ENCODE measurements at regions of chr5 and their contacts with region 1.

Region 1: GRCh38 chr5:151740336-151740942 is 18.0 kb downstream of the ATOX1 start:
- DNase-seq: no peak
- ATAC-seq: peak; percentile 70
- H3K4me3 ChIP-seq: no peak overlapping the region
- H3K27ac ChIP-seq: peak overlapping the region; percentile 54
- H3K4me1 ChIP-seq: peaks cover 39% of the 10 kb centered on the region
- H3K27me3 ChIP-seq: no peaks in the 10 kb centered on the region
- CTCF ChIP-seq: peak; percentile 76 to 88 (median 81)
- EP300 ChIP-seq: no peak
- POLR2A ChIP-seq: no peak
- RAD21 ChIP-seq: peak; percentile 90

Region 2: GRCh38 chr5:151023651-151024050 is 716.8 kb before region 1 on chr5:
- CTCF ChIA-PET with region 1: no interaction called
- POLR2A ChIA-PET with region 1: no interaction called
- RAD21 ChIA-PET with region 1: no interaction called
- SMC1A ChIA-PET with region 1: no interaction called
- in situ Hi-C with region 1: no loop called
- intact Hi-C with region 1: no loop called
- DNase-seq: no peak
- ATAC-seq: no peak
- H3K4me3 ChIP-seq: no peak overlapping the region
- H3K27ac ChIP-seq: no peak overlapping the region
- H3K4me1 ChIP-seq: no peaks in the 10 kb centered on the region
- H3K27me3 ChIP-seq: no peaks in the 10 kb centered on the region
- CTCF ChIP-seq: no peak
- EP300 ChIP-seq: no peak
- POLR2A ChIP-seq: 0 out of 2 replicates have a peak, but pooled peaks have one; percentile 5
- RAD21 ChIP-seq: no peak

Region 3: GRCh38 chr5:151447174-151448037 is 293.0 kb before region 1 on chr5 and contains the start of gene SLC36A1:
- CTCF ChIA-PET with region 1: interaction called, 6 read pairs
- POLR2A ChIA-PET with region 1: no interaction called
- RAD21 ChIA-PET with region 1: interaction called, 3 read pairs
- SMC1A ChIA-PET with region 1: no interaction called
- in situ Hi-C with region 1: loop called (anchors 5 kb)
- intact Hi-C with region 1: loop called (anchors 2 kb)
- DNase-seq: peak; percentile 68
- ATAC-seq: peak; percentile 89
- H3K4me3 ChIP-seq: peak within 1 kb of the TSS; percentile 87
- H3K27ac ChIP-seq: no peak within 1 kb of the TSS
- H3K4me1 ChIP-seq: peaks cover 12% of the 10 kb centered on the region
- H3K27me3 ChIP-seq: no peaks in the 10 kb centered on the region
- CTCF ChIP-seq: peak; percentile 84 to 97 (median 93); a peak in 4 of 6 replicates
- EP300 ChIP-seq: peak in 1 of 2 experiments; percentile 22; a peak in 1 of 4 replicates
- POLR2A ChIP-seq: peak; percentile 86
- RAD21 ChIP-seq: peak; percentile 94
- polyA plus RNA-seq, gene SLC36A1: 0.50 to 0.66 TPM

Region 4: DNA sequence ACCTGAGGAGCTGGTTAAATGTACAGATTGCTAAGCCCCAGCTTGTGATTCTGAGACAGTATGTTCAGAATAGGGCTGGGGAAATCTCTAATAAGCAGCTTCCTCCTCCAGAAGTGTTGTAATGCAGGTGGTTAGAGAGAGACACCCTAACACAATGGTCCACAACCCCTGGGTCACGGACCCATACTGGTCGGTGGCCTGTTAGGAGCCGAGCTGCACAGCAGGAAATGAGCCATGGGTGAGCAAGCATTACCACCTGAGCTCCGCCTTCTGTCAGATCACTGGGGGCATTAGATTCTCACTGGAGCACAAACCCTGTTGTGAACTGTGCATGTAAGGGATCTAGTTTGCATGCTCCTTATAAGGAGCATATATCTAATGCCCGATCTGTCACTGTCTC is 231.2 kb before region 1 on chr5:
- CTCF ChIA-PET with region 1: no interaction called
- POLR2A ChIA-PET with region 1: no interaction called
- RAD21 ChIA-PET with region 1: no interaction called
- SMC1A ChIA-PET with region 1: interaction called, 3 read pairs
- in situ Hi-C with region 1: loop called (anchors 10 kb)
- intact Hi-C with region 1: no loop called
- DNase-seq: no peak
- ATAC-seq: peak; percentile 32; the same call in 1 of the 3 replicates
- H3K4me3 ChIP-seq: no peak overlapping the region
- H3K27ac ChIP-seq: no peak overlapping the region
- H3K4me1 ChIP-seq: no peaks in the 10 kb centered on the region
- H3K27me3 ChIP-seq: no peaks in the 10 kb centered on the region
- CTCF ChIP-seq: no peak
- EP300 ChIP-seq: no peak
- POLR2A ChIP-seq: no peak
- RAD21 ChIP-seq: no peak

Region 5: GRCh38 chr5:151664694-151665585 is 75.5 kb before region 1 on chr5:
- CTCF ChIA-PET with region 1: interaction called, 381 read pairs
- POLR2A ChIA-PET with region 1: interaction called, 19 read pairs
- RAD21 ChIA-PET with region 1: interaction called, 207 read pairs
- SMC1A ChIA-PET with region 1: interaction called, 103 read pairs
- in situ Hi-C with region 1: loop called (anchors 5 kb)
- intact Hi-C with region 1: no loop called
- DNase-seq: no peak
- ATAC-seq: no peak
- H3K4me3 ChIP-seq: no peak overlapping the region
- H3K27ac ChIP-seq: peak overlapping the region; percentile 96
- H3K4me1 ChIP-seq: peaks cover 38% of the 10 kb centered on the region
- H3K27me3 ChIP-seq: no peaks in the 10 kb centered on the region
- CTCF ChIP-seq: no peak
- EP300 ChIP-seq: no peak
- POLR2A ChIP-seq: no peak
- RAD21 ChIP-seq: no peak

Region 6: DNA sequence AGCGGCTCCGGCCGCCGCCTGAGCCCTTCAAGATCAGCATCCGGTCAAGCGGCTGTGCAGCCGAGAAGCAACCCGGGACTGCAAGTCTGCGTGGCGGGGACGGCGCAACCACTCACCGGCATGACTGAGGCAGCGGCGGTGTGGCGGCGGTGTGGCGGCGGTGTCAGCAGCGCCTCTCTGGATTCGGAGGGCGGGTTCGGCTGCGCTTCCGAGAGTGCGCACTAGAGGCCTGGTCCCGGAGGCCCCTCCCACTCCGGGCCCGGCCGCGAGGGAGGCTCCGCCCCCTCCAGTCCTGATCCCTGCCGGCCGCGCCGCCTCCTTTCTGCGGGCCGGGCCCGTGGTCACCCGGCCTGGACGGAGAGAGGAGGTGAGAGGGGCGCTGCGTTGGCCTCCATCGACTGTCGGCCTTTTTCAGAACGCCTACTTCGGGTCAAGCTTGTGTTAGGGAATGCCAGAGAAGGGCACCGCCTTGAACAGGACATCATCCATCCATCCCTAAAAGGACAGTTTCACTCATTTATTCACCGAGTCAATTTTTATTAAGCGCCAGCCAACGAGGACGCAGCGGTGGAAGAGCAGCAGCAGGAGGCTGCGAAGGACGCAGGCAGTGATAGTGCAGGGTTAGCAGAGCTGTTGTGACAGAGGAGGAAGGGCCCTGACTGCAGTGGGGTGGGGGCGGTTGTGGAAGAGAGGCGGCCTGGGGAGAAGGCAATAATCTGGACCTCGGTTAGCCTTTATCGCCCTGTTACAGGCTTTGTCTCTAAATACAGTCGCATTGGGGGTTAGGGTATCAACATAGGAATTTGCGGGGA is 18.2 kb after region 1 on chr5 and contains the start of gene ATOX1:
- CTCF ChIA-PET with region 1: interaction called, 23 read pairs
- POLR2A ChIA-PET with region 1: interaction called, 5 read pairs
- RAD21 ChIA-PET with region 1: interaction called, 6 read pairs
- SMC1A ChIA-PET with region 1: interaction called, 15 read pairs
- in situ Hi-C with region 1: no loop called
- intact Hi-C with region 1: no loop called
- DNase-seq: peak; percentile 58
- ATAC-seq: peak; percentile 96
- H3K4me3 ChIP-seq: peak within 1 kb of the TSS; percentile 98
- H3K27ac ChIP-seq: peak within 1 kb of the TSS; percentile 86
- H3K4me1 ChIP-seq: peaks cover 23% of the 10 kb centered on the region
- H3K27me3 ChIP-seq: no peaks in the 10 kb centered on the region
- CTCF ChIP-seq: peak in 1 of 3 experiments; percentile 9; a peak in 1 of 6 replicates
- EP300 ChIP-seq: no peak
- POLR2A ChIP-seq: peak; percentile 100
- RAD21 ChIP-seq: no peak
- polyA plus RNA-seq, gene ATOX1: 576 to 642 TPM

Measured in GM12878 (cell line).